ENCODE measurements at regions of chr21 and their contacts with region 1.

Region 1: GRCh38 chr21:45319461-45320211 is 31.9 kb upstream of the POFUT2 start:
- DNase-seq: peak; percentile 48 to 71
- ATAC-seq: peak; percentile 70 to 77 (median 76)
- H3K4me3 ChIP-seq: no peak overlapping the region
- H3K27ac ChIP-seq: peak overlapping the region; percentile 84
- H3K4me1 ChIP-seq: peaks cover 12% of the 10 kb centered on the region
- H3K27me3 ChIP-seq: peaks cover 0 to 36% (median 5%) of the 10 kb centered on the region in 3 donors
- CTCF ChIP-seq: no peak

Region 2: DNA sequence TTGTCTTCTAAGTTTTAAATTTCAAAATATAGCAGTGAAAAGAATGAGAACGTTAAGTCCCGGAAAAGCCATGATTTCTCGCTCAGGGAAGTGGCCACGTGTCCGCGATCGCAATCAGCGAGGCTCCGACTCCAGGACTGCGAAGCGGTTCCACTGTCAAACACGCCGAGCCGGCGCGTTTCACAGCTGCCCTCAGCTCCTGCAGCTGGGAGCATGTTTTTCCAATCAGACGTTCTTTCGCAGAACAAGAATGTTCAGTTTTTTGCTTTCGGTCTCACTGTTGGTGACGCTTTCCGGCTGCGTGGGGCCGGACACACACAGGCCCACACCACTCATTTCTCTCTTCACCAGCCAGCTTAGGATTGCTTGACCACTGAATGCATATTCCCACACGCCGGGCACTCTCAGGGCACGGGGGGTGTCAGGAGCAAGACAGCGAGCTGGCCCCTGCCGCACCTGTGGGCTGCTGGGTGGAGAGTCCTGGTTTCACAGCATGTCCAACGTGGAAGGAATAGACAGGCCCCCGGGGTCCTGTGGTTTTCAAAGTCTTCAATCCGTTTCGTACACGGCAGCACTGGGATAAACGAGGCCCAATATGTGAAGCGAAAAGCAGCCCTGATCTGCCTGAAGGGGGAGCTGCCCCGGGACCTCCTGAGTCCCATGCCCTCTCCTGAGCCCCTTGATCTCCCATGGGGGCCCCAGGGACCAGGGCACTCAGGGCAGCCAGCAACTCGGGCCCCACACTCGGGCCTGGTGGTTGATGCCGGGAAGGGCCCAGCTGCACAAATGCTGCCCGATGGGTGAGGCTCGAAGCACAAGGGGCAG is 38.0 kb after region 1 on chr21:
- intact Hi-C with region 1: loop called in 1 of 2 experiments (anchors 5 kb)
- DNase-seq: peak; percentile 39 to 75
- ATAC-seq: peak; percentile 17 to 77 (median 38)
- H3K4me3 ChIP-seq: no peak overlapping the region
- H3K27ac ChIP-seq: peak overlapping the region; percentile 73
- H3K4me1 ChIP-seq: no peaks in the 10 kb centered on the region
- H3K27me3 ChIP-seq: peaks cover 0 to 25% (median 6%) of the 10 kb centered on the region in 3 donors
- CTCF ChIP-seq: no peak

Region 3: DNA sequence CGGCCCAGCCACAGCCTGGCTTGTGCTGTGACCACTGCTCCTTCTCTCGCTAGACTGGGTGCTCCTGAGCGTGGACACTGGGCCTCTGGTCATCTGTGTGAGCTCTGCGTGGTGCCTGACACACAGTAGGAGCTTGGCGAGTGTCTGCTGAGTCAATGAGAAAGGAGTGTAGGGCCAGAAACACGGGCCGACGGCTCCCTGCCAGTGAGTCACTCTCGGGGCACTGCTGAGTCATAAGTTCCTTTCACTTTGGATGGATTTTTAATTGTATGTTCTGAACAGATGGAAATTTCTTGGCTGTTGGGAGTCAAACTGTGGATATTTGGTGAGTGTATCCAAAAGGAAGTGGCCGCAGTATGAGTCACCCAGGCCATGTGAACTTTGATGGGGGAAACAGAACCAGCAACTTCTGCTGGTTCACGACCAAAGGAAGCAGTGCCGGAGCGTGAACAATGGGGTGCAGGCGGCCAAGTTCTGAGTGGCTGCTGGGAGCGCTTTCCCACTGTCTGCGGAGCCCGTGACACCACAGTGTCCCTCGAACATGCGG is 44.4 kb after region 1 on chr21:
- intact Hi-C with region 1: loop called in 1 of 2 experiments (anchors 1 kb)
- DNase-seq: peak; percentile 85 to 87
- ATAC-seq: peak; percentile 65 to 85 (median 70)
- H3K4me3 ChIP-seq: peak overlapping the region; percentile 11
- H3K27ac ChIP-seq: peak overlapping the region; percentile 88
- H3K4me1 ChIP-seq: peaks cover 12% of the 10 kb centered on the region
- H3K27me3 ChIP-seq: peaks cover 0 to 39% (median 9%) of the 10 kb centered on the region in 3 donors
- CTCF ChIP-seq: no peak

Measured in psoas muscle (tissue), 8 donors.